Naive thymus-derived CD4-positive, alpha-beta T cell (primary cell): ENCODE measurements at regions of chr13 and their contacts with region 1.

Region 1: DNA sequence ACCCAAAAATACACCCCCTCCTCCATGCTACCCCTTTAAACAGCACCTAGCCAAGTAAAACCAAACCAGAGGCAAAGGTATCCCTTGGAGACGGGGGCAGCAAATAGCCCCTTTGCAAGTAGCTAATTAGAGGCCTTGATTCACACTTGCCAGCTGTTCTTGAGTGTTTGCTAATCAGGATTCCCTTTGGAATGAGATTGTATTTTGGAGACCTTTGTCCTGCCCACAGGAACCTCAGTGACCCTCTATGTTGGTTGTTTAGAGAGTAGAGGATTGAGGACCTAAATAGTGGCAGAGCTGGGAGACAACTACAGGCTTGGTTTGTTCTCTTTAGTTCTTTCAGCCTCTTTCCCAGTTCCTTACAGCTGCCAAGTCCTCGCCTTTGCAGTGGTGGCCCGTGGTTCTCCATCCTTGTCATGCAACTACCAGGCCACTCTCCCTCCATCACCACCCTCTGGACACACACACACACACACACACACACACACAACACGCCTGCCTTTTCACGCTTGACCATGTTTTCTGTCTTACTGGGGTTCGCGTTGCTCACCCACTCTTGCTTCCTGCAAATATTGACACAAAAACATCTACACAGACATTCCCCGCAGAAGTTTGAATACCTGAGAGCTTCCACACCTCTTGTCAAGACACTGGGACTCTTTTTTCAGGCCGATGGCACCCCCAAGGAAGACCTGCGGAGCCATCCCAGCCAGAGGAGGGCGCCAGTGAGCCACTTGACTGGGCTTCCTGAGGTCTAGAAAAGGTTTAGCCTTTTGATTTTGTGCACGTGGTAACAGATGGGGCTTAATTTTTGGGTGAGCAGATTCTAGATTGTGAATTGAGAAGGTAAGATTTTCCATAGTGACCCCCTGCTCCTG is 80.0 kb upstream of the GPR183 start:
- DNase-seq: peak; percentile 74 to 89 (median 84)
- ATAC-seq: peak; percentile 65
- H3K4me3 ChIP-seq: no peak overlapping the region
- H3K4me3 Mint-ChIP-seq: peak overlapping the region in 9 of 10 donors; percentile 2 to 73 (median 62)
- H3K27ac ChIP-seq: peak overlapping the region; percentile 85
- H3K27ac Mint-ChIP-seq: peak overlapping the region; percentile 44 to 99 (median 98)
- H3K4me1 ChIP-seq: peaks cover 59 to 65% of the 10 kb centered on the region in 2 donors
- H3K4me1 Mint-ChIP-seq: peaks cover 35 to 83% (median 76%) of the 10 kb centered on the region in 7 donors
- H3K27me3 ChIP-seq: no peaks in the 10 kb centered on the region
- H3K27me3 Mint-ChIP-seq: no peaks in the 10 kb centered on the region

Region 2: GRCh38 chr13:99176309-99177276 is 210.6 kb before region 1 on chr13:
- CTCF ChIA-PET with region 1: interaction called, 12 read pairs
- POLR2A ChIA-PET with region 1: interaction called, 3 read pairs
- intact Hi-C with region 1: loop called (anchors 2 to 5 kb)
- DNase-seq: peak; percentile 54 to 79 (median 71)
- ATAC-seq: peak; percentile 95
- H3K4me3 ChIP-seq: peak overlapping the region; percentile 1
- H3K4me3 Mint-ChIP-seq: peak overlapping the region; percentile 39 to 81 (median 72)
- H3K27ac ChIP-seq: no peak overlapping the region
- H3K27ac Mint-ChIP-seq: peak overlapping the region in 8 of 9 donors; percentile 34 to 77 (median 54)
- H3K4me1 ChIP-seq: peaks cover 22 to 24% of the 10 kb centered on the region in 2 donors
- H3K4me1 Mint-ChIP-seq: peaks cover 26 to 44% (median 39%) of the 10 kb centered on the region in 7 donors
- H3K27me3 ChIP-seq: no peaks in the 10 kb centered on the region
- H3K27me3 Mint-ChIP-seq: peaks cover 0 to 13% (median 0%) of the 10 kb centered on the region in 5 donors

Region 3: GRCh38 chr13:99322297-99323103 is 64.7 kb before region 1 on chr13:
- CTCF ChIA-PET with region 1: interaction called, 9 read pairs
- POLR2A ChIA-PET with region 1: interaction called, 7 read pairs
- intact Hi-C with region 1: loop called (anchors 1 to 2 kb)
- DNase-seq: peak in 6 of 9 donors; percentile 35 to 64 (median 48)
- ATAC-seq: peak; percentile 81
- H3K4me3 ChIP-seq: peak overlapping the region; percentile 2
- H3K4me3 Mint-ChIP-seq: peak overlapping the region; percentile 51 to 84 (median 67)
- H3K27ac ChIP-seq: peak overlapping the region; percentile 77
- H3K27ac Mint-ChIP-seq: peak overlapping the region; percentile 88 to 99 (median 95)
- H3K4me1 ChIP-seq: peaks cover 65 to 66% of the 10 kb centered on the region in 2 donors
- H3K4me1 Mint-ChIP-seq: peaks cover 38 to 95% (median 75%) of the 10 kb centered on the region in 7 donors
- H3K27me3 ChIP-seq: no peaks in the 10 kb centered on the region
- H3K27me3 Mint-ChIP-seq: no peaks in the 10 kb centered on the region

Region 4: DNA sequence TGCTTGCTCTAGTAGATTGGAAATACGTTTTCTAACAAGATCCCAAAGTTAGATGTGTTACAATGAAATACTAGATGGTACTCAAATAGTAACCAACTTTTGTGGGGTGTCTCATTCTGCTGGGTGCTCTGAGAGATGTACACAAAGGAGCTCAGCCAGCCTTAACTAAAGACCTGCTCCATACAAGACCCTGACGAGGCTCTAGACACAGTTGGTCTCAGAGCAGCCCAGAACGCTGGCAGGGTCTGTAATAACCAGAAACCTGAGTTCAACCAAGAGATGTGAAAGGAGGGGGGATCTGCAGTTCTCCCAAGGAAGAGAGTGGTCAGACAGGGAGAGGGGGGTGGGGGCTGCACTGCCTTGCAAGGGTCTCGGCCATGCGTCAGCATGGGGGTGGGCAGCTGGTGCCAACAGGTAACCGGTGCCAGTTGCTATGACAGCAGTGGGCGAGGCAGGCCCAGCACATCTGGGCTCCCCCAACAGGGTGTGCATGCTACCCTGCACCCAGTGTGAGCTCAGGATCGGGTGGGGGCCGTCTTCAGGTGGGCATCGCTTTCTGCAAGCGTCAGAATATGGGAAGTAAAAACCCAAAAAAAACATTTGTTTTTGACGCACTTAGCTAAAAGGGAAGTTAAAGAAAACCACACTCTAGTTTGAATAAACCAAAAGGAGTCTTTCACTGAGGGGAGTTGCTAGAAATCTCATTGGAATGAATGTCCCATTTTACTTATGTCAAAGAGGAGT is 12.0 kb before region 1 on chr13:
- CTCF ChIA-PET with region 1: interaction called, 13 read pairs
- POLR2A ChIA-PET with region 1: interaction called, 96 read pairs
- intact Hi-C with region 1: loop called in 1 of 2 experiments (anchors 1 kb)
- DNase-seq: peak; percentile 20 to 93 (median 87)
- ATAC-seq: peak; percentile 94
- H3K4me3 ChIP-seq: peak overlapping the region; percentile 38
- H3K4me3 Mint-ChIP-seq: peak overlapping the region; percentile 50 to 87 (median 72)
- H3K27ac ChIP-seq: peak overlapping the region; percentile 88
- H3K27ac Mint-ChIP-seq: peak overlapping the region; percentile 87 to 100 (median 99)
- H3K4me1 ChIP-seq: peaks cover 67 to 84% of the 10 kb centered on the region in 2 donors
- H3K4me1 Mint-ChIP-seq: peaks cover 60 to 100% (median 95%) of the 10 kb centered on the region in 7 donors
- H3K27me3 ChIP-seq: no peaks in the 10 kb centered on the region
- H3K27me3 Mint-ChIP-seq: no peaks in the 10 kb centered on the region

Region 5: DNA sequence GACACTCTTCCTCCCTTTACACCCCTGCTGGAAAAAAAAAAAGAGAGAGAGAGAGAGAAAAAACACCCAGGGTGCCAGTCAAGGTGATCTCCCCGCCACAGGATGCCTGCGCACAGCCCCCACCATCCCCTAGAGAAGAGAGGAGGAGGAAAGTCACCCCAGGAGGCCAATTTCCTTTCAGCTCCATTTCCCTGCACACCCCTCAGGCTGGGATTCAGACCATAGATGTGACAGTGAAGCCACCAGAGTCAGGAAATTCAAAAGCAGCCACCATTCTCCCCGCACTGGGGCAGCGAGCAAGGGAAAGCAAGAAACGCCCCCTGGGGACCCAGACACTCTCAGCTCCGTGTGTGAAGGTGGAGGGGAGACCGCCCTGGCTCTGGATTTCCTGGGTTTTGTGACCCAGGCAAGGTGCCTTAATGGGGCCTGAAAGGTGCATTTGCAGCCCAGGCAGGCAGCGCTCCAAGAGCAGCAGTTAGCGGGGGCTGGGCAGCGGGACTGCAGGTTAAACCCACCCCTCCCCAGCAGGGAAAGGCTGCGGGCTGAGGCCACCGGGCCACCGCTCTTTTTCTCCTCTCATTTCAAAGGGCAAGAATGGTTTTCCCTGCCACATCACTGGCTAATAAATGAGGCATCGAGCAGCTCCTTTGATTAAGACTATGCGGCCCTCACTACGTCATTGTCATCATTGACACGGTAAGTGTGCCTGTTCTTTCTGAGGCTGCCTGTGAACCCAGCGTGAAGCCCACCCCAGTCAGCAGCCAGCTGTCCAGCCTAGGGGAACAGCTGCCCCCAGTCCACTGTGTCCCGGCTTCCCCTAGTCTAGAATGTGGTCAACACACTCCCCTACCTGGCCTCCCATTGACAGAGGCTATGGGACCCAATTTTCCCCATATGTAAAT is 30.3 kb after region 1 on chr13:
- CTCF ChIA-PET with region 1: interaction called, 39 read pairs
- POLR2A ChIA-PET with region 1: interaction called, 25 read pairs
- intact Hi-C with region 1: loop called in 1 of 2 experiments (anchors 1 kb)
- DNase-seq: peak in 7 of 9 donors; percentile 58 to 78 (median 77)
- ATAC-seq: peak; percentile 40
- H3K4me3 ChIP-seq: peak overlapping the region; percentile 65
- H3K4me3 Mint-ChIP-seq: peak overlapping the region in 1 of 10 donors; percentile 50
- H3K27ac ChIP-seq: peak overlapping the region; percentile 91
- H3K27ac Mint-ChIP-seq: peak overlapping the region in 1 of 9 donors; percentile 26
- H3K4me1 ChIP-seq: peaks cover 18 to 78% of the 10 kb centered on the region in 2 donors
- H3K4me1 Mint-ChIP-seq: peaks cover 32 to 64% (median 49%) of the 10 kb centered on the region in 7 donors
- H3K27me3 ChIP-seq: no peaks in the 10 kb centered on the region
- H3K27me3 Mint-ChIP-seq: peaks cover 0 to 4% (median 0%) of the 10 kb centered on the region in 5 donors